ENCODE measurements at regions of chr11 and their contacts with region 1.

Region 1: DNA sequence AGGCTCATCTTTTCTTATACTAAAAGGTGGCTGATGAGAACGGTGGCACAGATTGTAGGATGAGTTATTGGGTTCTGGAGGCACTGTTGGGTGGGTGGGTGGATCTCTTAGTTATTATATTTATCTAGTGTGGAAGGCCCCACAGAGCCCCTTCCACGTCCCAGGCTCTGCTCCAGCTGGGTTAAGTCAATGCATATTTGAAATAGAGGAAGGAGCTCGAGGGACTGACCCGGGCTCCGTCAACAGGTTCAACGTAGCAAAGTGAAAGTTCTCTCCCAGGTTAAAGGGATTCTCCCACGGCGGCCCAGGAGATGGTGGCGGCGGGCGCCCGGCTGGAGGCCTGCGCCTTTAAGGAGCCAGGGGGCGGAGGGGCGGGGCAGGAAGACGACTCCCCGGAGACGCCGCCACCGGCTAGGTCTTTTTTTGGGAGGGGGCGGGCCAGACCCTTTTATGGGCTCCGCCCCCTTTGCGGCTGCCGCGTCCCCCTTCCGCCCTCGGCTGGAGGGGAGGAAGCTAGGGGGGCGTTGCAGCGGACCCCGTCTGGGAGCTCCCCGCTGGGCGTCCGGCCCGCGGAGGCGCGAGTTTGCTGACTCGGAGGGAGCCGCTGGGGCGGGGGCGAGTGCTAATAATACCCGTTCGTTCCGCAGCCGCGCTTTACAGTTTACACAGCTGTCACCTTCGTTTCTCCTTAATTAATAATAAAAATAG is 1.5 kb upstream of the INPPL1 start:
- DNase-seq: peak; percentile 93
- H3K4me3 ChIP-seq: peak overlapping the region; percentile 62 to 94 (median 70)
- H3K27ac ChIP-seq: peak overlapping the region; percentile 60
- H3K4me1 ChIP-seq: peaks cover 9% of the 10 kb centered on the region
- H3K27me3 ChIP-seq: peaks cover 4 to 7% of the 10 kb centered on the region in 2 experiments
- CTCF ChIP-seq: peak in 1 of 2 donors; percentile 16
- POLR2A ChIP-seq: no peak

Region 2: GRCh38 chr11:72112321-72113219 is 110.5 kb before region 1 on chr11 and contains the start of gene ANAPC15:
- CTCF ChIA-PET with region 1: no interaction called
- POLR2A ChIA-PET with region 1: interaction called, 5 read pairs
- dilution Hi-C with region 1: no loop called
- intact Hi-C with region 1: loop called (anchors 1 kb)
- DNase-seq: peak; percentile 100
- H3K4me3 ChIP-seq: peak within 1 kb of the TSS; percentile 14 to 69 (median 53)
- H3K27ac ChIP-seq: peak within 1 kb of the TSS; percentile 90
- H3K4me1 ChIP-seq: peaks cover 14% of the 10 kb centered on the region
- H3K27me3 ChIP-seq: peaks cover 0 to 3% of the 10 kb centered on the region in 2 experiments
- CTCF ChIP-seq: no peak
- POLR2A ChIP-seq: peak; percentile 99
- total RNA-seq, gene ANAPC15: 67.0 and 72.4 TPM in 2 replicates

Region 3: GRCh38 chr11:72179804-72180396 is 43.2 kb before region 1 on chr11:
- CTCF ChIA-PET with region 1: interaction called, 14 read pairs
- POLR2A ChIA-PET with region 1: no interaction called
- dilution Hi-C with region 1: no loop called
- intact Hi-C with region 1: no loop called
- DNase-seq: no peak
- H3K4me3 ChIP-seq: no peak overlapping the region
- H3K27ac ChIP-seq: no peak overlapping the region
- H3K4me1 ChIP-seq: no peaks in the 10 kb centered on the region
- H3K27me3 ChIP-seq: peaks cover 11% of the 10 kb centered on the region in 2 experiments
- CTCF ChIP-seq: no peak
- POLR2A ChIP-seq: no peak

Region 4: DNA sequence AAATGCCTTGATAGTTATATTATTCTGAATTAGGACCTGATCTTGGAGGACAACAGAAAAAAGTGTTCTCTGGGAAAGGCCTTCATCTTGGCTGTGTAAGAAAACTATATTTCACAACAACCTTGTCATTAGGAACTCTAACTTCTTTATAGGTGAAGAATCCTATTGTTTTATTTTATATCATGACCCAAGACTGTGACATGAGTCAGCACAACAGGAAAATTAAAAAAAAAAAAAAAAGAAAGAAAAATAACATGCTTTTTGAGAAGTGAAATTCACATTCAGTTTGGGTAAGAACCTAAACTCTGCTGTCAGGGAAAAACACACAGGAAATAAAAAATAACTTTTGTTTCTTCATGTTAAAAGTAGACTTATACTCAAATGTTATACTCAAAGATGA is 18.2 kb before region 1 on chr11:
- CTCF ChIA-PET with region 1: no interaction called
- POLR2A ChIA-PET with region 1: no interaction called
- dilution Hi-C with region 1: no loop called
- intact Hi-C with region 1: loop called (anchors 2 kb)
- DNase-seq: peak; percentile 78
- H3K4me3 ChIP-seq: no peak overlapping the region
- H3K27ac ChIP-seq: no peak overlapping the region
- H3K4me1 ChIP-seq: peaks cover 7% of the 10 kb centered on the region
- H3K27me3 ChIP-seq: peaks cover 0 to 3% of the 10 kb centered on the region in 2 experiments
- CTCF ChIP-seq: no peak
- POLR2A ChIP-seq: no peak

Region 5: DNA sequence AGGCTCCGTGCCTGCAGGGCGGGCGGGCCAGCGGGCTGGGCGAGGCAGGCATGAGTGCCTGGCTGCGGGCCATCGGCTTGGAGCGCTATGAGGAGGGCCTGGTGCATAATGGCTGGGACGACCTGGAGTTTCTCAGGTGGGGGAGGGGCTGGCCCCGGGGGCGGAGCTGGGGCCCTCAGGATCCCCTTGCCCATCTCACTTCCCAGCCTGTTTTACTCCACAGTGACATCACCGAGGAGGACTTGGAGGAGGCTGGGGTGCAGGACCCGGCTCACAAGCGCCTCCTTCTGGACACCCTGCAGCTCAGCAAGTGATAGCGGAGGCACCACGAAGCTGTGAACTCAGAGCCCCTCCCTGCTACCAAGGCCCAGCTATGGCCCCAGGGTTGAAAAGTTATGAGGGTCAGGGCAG is 15.0 kb after region 1 on chr11:
- CTCF ChIA-PET with region 1: interaction called, 11 read pairs
- POLR2A ChIA-PET with region 1: interaction called, 4 read pairs
- dilution Hi-C with region 1: no loop called
- intact Hi-C with region 1: loop called (anchors 1 kb)
- DNase-seq: peak; percentile 51
- H3K4me3 ChIP-seq: no peak overlapping the region
- H3K27ac ChIP-seq: no peak overlapping the region
- H3K4me1 ChIP-seq: peaks cover 12% of the 10 kb centered on the region
- H3K27me3 ChIP-seq: peaks cover 28 to 37% of the 10 kb centered on the region in 2 experiments
- CTCF ChIP-seq: peak; percentile 77 to 85
- POLR2A ChIP-seq: peak; percentile 45

Region 6: GRCh38 chr11:72333661-72334060 is 110.6 kb after region 1 on chr11:
- CTCF ChIA-PET with region 1: no interaction called
- POLR2A ChIA-PET with region 1: no interaction called
- dilution Hi-C with region 1: no loop called
- intact Hi-C with region 1: no loop called
- DNase-seq: no peak
- H3K4me3 ChIP-seq: no peak overlapping the region
- H3K27ac ChIP-seq: no peak overlapping the region
- H3K4me1 ChIP-seq: peaks cover 13% of the 10 kb centered on the region
- H3K27me3 ChIP-seq: no peaks in the 10 kb centered on the region
- CTCF ChIP-seq: no peak
- POLR2A ChIP-seq: no peak